Activated T-helper 2 cell treated with anti-CD3 and anti-CD28 coated beads, Interferon-gamma antibody, Interleukin-2, Interleukin-4, amounts not matched to agents 10 μg/mL and 5 μg/mL and 100 μg/mL, durations not matched to agents 14 hours and 24 hours and 36 hours (primary cell): ENCODE measurements at regions of chrX and their contacts with region 1.

Region 1: DNA sequence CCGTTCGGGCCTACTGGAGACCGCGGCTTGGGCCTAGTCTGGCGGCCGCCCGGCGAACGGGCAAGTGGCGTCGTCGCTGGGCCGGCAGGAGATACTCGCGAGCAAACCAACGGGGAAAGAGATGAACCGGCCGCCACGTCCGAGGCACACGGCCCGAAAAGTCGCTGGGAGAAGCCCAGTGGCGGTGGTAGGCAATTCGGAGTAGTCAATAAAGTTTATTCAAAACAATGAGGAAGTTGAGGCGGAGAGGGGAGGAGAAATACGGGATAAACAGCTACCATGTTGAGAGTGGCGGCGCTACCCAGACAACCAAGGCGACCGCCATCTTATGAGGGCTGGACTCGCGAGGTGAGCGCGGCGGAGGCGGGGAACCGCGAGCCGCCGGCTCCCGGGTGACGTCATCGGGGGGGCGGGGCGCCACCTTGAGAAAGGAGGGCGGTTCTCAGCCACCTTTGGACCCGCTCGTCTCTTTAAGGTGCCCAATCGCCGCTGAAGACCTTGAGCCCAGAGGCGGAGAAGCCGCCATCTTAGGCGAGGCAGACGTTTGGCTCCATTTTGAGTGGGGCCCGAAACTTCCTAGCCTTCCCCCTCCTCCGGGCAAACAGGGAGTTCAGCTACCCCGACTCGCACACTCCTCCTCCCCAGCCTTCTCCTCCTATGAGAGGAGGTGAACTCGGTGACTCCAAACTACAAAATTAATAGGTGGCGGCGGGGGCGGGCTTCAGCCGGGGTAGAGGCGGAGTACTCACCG is at the start of gene PHF8:
- DNase-seq: peak; percentile 93
- H3K4me3 Mint-ChIP-seq: peak within 1 kb of the TSS; percentile 88
- H3K27ac Mint-ChIP-seq: peak within 1 kb of the TSS; percentile 97
- H3K4me1 Mint-ChIP-seq: peaks cover 15% of the 10 kb centered on the region
- H3K27me3 Mint-ChIP-seq: no peaks in the 10 kb centered on the region
- total RNA-seq, gene PHF8: 41.8 and 47.5 TPM in 2 replicates

Region 2: GRCh38 chrX:53224860-53225797 is 819.2 kb before region 1 on chrX and contains the start of gene KDM5C:
- intact Hi-C with region 1: loop called (anchors 1 kb)
- DNase-seq: peak; percentile 85
- H3K4me3 Mint-ChIP-seq: peak within 1 kb of the TSS; percentile 93
- H3K27ac Mint-ChIP-seq: peak within 1 kb of the TSS; percentile 98
- H3K4me1 Mint-ChIP-seq: peaks cover 39% of the 10 kb centered on the region
- H3K27me3 Mint-ChIP-seq: no peaks in the 10 kb centered on the region
- total RNA-seq, gene KDM5C: 98.3 and 111 TPM in 2 replicates

Region 3: GRCh38 chrX:53683556-53684414 is 360.5 kb before region 1 on chrX:
- intact Hi-C with region 1: loop called (anchors 1 kb)
- DNase-seq: peak; percentile 90
- H3K4me3 Mint-ChIP-seq: peak overlapping the region; percentile 94
- H3K27ac Mint-ChIP-seq: peak overlapping the region; percentile 93
- H3K4me1 Mint-ChIP-seq: peaks cover 29% of the 10 kb centered on the region
- H3K27me3 Mint-ChIP-seq: no peaks in the 10 kb centered on the region

Region 4: DNA sequence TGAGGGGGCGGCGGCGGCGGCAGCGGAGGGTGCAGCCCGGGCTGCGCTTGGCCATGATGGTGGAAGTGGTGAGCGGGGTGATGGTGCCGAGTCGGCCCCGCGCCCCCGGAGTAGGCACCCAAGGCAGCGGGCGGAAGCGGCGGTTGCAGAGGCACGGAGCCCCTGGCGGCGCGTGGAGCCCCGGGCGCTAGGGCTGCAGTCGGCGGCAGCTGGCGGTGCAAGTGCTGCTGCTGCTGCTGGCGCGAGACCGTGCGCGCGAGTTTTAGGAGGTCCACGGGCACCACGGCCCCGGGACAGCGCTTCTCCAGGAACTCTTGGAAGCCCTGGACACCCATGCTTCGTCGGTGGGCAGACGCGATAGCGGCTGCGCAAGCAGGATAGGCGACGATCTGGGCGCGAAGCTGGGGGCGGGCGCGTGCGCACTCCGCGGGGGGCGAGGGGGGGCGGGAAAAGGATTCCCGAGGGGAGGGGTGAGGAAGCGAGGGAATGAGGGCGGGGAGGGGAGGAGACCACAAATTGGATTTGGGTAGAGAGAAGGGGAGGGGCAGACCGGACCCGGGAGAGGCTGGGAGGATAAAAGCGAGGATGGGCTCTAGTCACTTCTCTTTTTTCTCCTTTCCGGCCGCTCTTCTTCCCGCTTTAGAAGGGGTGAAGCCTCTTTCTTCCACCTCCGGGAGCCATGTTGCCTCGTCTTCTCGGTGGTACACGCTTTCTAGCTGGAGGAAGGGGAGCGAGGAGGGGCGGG is 138.7 kb after region 1 on chrX and contains the start of gene FAM120C:
- intact Hi-C with region 1: loop called (anchors 1 kb)
- DNase-seq: peak; percentile 50
- H3K4me3 Mint-ChIP-seq: peak within 1 kb of the TSS; percentile 86
- H3K27ac Mint-ChIP-seq: peak within 1 kb of the TSS; percentile 81
- H3K4me1 Mint-ChIP-seq: peaks cover 39% of the 10 kb centered on the region
- H3K27me3 Mint-ChIP-seq: no peaks in the 10 kb centered on the region
- total RNA-seq, gene FAM120C: 10.0 and 10.6 TPM in 2 replicates

Region 5: DNA sequence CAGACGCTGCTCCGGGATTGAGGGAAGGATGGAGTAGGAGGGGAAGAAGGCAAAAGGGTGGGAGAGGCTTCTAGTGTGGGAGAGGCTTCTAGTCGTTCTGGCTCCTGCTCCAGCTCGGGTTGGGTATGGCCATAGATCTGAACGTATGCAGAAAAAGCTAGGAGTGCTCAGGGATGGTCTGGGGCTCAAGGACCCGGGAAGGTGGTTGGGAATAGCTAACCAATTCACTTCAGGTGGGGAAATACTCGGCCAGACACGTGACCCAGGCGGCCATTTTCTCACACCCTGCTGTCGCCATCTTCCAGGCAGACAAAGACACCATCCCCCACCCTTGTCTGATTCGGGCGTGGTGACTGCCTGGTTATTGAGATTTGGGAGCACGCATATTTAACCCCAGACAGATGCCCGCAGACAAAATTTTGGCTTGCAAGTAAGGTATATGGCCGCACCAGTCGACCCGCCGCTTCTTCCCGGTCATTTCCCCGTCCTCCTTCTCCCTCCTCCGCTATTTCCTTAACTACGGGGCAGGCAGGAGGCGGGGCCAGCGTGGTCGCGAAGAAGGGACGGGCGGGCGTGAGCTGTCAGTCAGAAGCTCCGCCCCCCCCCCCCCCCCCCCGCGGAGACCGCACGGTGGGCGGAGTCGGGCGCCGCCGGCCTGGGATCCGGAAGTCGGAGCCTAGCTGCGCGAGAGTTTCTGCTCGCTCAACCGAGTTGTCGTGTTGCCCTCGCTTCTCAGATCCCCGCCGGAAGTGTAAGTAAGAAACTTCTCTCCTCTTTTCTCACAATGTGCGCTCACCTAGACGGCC is 485.5 kb after region 1 on chrX and contains the start of gene GNL3L:
- intact Hi-C with region 1: loop called (anchors 1 kb)
- DNase-seq: peak; percentile 74
- H3K4me3 Mint-ChIP-seq: peak within 1 kb of the TSS; percentile 91
- H3K27ac Mint-ChIP-seq: peak within 1 kb of the TSS; percentile 95
- H3K4me1 Mint-ChIP-seq: peaks cover 24% of the 10 kb centered on the region
- H3K27me3 Mint-ChIP-seq: no peaks in the 10 kb centered on the region
- total RNA-seq, gene GNL3L: 63.6 and 64.5 TPM in 2 replicates

Region 6: GRCh38 chrX:55160685-55161552 is 1116.6 kb after region 1 on chrX:
- intact Hi-C with region 1: loop called (anchors 10 kb)
- DNase-seq: peak; percentile 83
- H3K4me3 Mint-ChIP-seq: peak overlapping the region; percentile 82
- H3K27ac Mint-ChIP-seq: peak overlapping the region; percentile 90
- H3K4me1 Mint-ChIP-seq: peaks cover 14% of the 10 kb centered on the region
- H3K27me3 Mint-ChIP-seq: peaks cover 13% of the 10 kb centered on the region